ENCODE measurements at regions of chr3 and their contacts with region 1.

Region 1: DNA sequence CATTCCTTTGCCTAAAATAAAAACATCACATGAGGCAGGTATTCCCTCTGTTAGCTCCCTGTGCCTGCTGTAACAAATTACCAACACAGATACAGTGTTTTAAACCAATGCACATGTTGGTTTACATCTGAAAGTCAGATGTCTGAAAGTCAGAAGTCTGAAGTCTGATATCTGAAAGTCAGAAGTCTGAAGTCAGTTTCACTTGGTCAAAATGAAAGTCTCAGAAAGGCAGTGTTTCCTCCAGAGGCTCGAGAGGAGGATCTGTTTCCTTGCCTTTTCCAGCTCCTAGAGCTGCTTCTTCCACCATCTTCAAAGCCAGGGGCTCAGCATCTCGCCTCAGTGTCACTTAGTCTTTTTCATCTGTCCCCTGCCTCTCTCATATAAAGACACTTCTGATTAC is 22.0 kb downstream of the SST start:
- DNase-seq: no peak
- ATAC-seq: no peak
- H3K4me3 Mint-ChIP-seq: no peak overlapping the region
- H3K27ac Mint-ChIP-seq: no peak overlapping the region
- H3K4me1 Mint-ChIP-seq: no peaks in the 10 kb centered on the region
- H3K27me3 Mint-ChIP-seq: peaks cover 38% of the 10 kb centered on the region

Region 2: DNA sequence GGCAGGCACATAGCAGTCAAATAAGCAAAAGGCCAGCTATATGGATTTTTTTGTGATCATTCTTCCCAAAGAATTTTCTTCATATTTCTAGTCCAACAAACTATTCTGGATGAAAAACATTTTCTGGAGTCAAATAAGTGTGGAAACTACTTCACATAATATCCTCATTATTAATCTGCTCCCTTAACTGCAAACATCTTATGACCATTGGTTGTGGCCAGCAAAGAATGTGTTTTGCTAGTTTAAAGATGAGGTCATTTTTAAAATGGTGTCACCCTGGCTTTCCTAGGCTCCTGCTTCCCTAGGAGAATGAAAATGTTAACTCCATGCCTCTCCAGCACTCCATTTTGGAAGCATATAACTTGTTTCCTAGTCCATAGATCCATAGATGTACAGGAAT is 96.8 kb before region 1 on chr3:
- CTCF ChIA-PET with region 1: no interaction called
- POLR2A ChIA-PET with region 1: no interaction called
- intact Hi-C with region 1: no loop called
- DNase-seq: no peak
- ATAC-seq: no peak
- H3K4me3 Mint-ChIP-seq: no peak overlapping the region
- H3K27ac Mint-ChIP-seq: no peak overlapping the region
- H3K4me1 Mint-ChIP-seq: no peaks in the 10 kb centered on the region
- H3K27me3 Mint-ChIP-seq: peaks cover 24% of the 10 kb centered on the region

Region 3: DNA sequence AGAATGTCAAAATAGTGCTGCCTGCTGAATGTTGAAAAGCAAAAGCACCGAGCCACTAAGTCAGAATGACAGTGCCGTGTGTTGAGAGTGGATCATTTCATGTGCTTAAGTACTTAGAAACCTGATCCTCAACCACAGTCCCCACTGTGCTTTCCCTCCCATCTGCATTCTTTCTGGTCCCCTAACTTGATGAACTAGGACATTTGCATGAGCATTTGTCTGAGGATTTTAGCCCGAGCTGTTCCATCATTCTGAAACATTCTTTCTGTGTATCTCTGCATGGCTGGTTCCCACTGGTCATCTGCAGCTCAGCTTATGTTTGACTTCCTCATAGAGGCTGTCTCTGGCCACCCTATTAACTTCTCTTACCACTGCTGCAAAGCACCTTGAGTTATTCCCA is 20.0 kb before region 1 on chr3:
- CTCF ChIA-PET with region 1: no interaction called
- POLR2A ChIA-PET with region 1: no interaction called
- intact Hi-C with region 1: no loop called
- DNase-seq: no peak
- ATAC-seq: no peak
- H3K4me3 Mint-ChIP-seq: no peak overlapping the region
- H3K27ac Mint-ChIP-seq: no peak overlapping the region
- H3K4me1 Mint-ChIP-seq: no peaks in the 10 kb centered on the region
- H3K27me3 Mint-ChIP-seq: peaks cover 9% of the 10 kb centered on the region

Region 4: GRCh38 chr3:187669675-187670504 is 21.7 kb after region 1 on chr3 and contains the start of gene SST:
- CTCF ChIA-PET with region 1: interaction called, 11 read pairs
- POLR2A ChIA-PET with region 1: interaction called, 8 read pairs
- intact Hi-C with region 1: no loop called
- DNase-seq: peak; percentile 64
- ATAC-seq: peak; percentile 40
- H3K4me3 Mint-ChIP-seq: no peak within 1 kb of the TSS
- H3K27ac Mint-ChIP-seq: no peak within 1 kb of the TSS
- H3K4me1 Mint-ChIP-seq: peaks cover 12% of the 10 kb centered on the region
- H3K27me3 Mint-ChIP-seq: peaks cover 55% of the 10 kb centered on the region
- total RNA-seq, gene SST: not detected

Measured in activated CD4-positive, alpha-beta T cell treated with anti-CD3 and anti-CD28 coated beads for 36 hours (primary cell).